Thyroid gland (tissue), 4 donors: ENCODE measurements at regions of chr9 and their contacts with region 1.

Region 1: DNA sequence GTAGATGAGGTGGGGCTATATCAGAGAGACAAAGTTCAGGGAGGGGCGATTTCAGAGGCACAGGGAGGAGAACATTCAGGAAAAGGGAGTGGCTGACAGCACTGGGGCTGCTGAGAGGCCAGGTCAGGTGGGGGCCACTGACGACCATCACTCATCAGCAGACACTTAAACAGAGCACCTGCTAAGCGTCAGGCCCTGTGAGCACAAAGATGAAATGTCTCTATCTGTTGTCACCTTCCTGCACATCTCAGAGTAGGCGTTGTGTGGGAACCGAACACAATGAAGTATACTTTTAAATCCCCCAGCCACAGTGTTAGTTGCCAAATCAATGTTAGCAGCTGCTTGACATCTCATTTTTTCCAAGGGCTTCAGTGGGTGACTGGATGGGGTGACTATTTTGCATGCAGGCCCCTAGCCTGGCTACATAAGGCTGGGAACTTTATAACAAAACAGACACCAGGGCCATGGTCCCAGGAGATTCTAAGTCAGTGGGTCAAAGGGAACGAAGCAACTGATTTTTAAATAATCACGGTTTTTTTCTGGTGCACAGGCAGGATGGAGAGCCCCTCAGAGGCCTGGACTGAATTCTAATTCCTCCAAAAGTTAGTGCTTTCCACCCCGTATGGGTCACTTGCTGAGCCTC is 31.1 kb upstream of the ANKRD18A start:
- DNase-seq: no peak
- H3K4me3 ChIP-seq: no peak overlapping the region
- H3K27ac ChIP-seq: no peak overlapping the region
- H3K4me1 ChIP-seq: peaks cover 0 to 7% of the 10 kb centered on the region in 2 donors
- H3K27me3 ChIP-seq: no peaks in the 10 kb centered on the region
- CTCF ChIP-seq: no peak
- POLR2A ChIP-seq: no peak

Region 2: GRCh38 chr9:38707885-38708637 is 56.5 kb after region 1 on chr9:
- intact Hi-C with region 1: loop called (anchors 10 kb)
- DNase-seq: no peak
- H3K4me3 ChIP-seq: no peak overlapping the region
- H3K27ac ChIP-seq: no peak overlapping the region
- H3K4me1 ChIP-seq: no peaks in the 10 kb centered on the region
- H3K27me3 ChIP-seq: no peaks in the 10 kb centered on the region
- CTCF ChIP-seq: peak in 3 of 6 experiments; percentile 27 to 44 (median 36)
- POLR2A ChIP-seq: no peak